Activated T-helper 1 cell treated with anti-CD3 and anti-CD28 coated beads, Interleukin-12 subunit alpha, Interleukin-12 subunit beta, Interleukin-2, Interleukin-4 antibody, amounts not matched to agents 30 ng/mL and 10 ng/mL and 1 ng/mL, durations not matched to agents 14 hours and 24 hours and 36 hours (primary cell): ENCODE measurements at regions of chr1 and their contacts with region 1.

Region 1: DNA sequence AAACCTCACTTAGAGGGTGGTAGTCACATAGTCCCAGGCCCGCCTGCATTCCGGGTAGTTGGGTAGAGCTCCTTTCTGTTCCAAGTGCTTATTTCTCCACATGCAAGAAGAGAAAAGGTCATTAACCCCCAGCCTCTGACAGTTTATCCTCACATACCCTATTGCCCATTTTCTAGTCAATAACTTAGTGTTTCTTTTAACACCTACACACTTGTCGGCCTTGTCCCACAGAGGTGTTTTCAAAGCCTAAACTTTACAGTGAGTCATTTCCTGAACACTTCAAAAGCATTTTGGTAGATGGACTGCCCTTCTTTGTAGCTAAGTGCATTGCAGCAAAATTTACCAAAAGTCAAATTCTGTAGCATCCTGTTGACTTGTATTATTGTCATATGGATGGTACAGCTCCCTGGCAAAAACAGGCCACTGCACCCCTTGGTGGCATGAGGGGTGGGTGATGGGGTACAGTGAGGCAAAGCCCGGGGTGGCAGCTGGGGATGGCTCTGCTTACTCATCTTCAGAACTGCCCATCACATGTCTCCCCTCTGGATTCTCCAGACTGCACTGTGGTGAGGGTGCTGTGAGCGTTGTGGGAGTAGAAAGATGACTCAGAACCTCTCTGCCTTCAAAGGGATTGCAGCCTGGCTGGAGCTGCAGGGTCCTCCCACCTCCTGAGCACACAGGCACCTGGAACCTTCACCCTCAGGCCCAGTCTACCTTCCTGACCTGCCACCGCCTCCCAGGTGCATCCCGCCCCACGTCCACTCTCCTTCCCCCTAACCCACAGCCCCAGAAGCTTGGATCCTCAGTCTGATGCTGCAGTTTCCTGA is 45.8 kb upstream of the DMRTB1 start:
- DNase-seq: peak; percentile 73
- H3K4me3 Mint-ChIP-seq: peak overlapping the region; percentile 68
- H3K27ac Mint-ChIP-seq: peak overlapping the region; percentile 95
- H3K4me1 Mint-ChIP-seq: peaks cover 86% of the 10 kb centered on the region
- H3K27me3 Mint-ChIP-seq: no peaks in the 10 kb centered on the region

Region 2: DNA sequence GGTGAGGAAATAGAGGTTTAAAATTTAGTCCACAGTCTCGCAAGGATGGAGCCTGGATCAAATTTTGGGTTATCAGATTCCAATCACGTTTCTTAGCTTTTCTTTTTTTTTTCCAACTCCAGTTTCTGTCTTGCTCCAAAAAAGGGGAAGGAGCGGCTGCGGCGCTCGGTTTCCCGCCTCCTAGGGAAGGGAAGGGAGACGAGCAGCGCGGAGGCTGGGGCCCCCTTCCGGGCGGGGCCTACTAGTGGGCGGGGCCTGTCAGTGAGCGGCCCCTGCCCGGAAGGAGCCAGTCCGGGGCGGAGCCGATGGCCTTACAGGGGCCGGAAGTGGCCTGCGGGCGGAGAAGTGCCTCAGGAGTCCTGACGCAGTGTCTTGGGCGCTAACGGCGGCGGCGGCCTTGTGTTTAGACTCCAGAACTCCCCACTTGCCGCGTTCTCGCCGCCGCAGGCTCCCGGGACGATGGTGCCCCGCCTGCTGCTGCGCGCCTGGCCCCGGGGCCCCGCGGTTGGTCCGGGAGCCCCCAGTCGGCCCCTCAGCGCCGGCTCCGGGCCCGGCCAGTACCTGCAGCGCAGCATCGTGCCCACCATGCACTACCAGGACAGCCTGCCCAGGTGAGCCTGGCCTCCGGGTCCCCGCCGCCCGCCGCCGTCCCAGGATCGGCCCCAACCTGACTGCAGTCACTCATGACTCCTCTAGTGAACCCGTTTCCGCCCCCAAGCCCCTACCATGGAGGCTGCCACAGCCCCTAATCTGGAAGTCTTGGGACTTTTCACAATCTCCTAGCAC is 216.7 kb before region 1 on chr1 and contains the start of gene CPT2:
- intact Hi-C with region 1: loop called (anchors 1 kb)
- DNase-seq: peak; percentile 92
- H3K4me3 Mint-ChIP-seq: peak within 1 kb of the TSS; percentile 95
- H3K27ac Mint-ChIP-seq: peak within 1 kb of the TSS; percentile 92
- H3K4me1 Mint-ChIP-seq: peaks cover 28% of the 10 kb centered on the region
- H3K27me3 Mint-ChIP-seq: no peaks in the 10 kb centered on the region
- total RNA-seq, gene CPT2: 18.5 and 19.4 TPM in 2 replicates

Region 3: DNA sequence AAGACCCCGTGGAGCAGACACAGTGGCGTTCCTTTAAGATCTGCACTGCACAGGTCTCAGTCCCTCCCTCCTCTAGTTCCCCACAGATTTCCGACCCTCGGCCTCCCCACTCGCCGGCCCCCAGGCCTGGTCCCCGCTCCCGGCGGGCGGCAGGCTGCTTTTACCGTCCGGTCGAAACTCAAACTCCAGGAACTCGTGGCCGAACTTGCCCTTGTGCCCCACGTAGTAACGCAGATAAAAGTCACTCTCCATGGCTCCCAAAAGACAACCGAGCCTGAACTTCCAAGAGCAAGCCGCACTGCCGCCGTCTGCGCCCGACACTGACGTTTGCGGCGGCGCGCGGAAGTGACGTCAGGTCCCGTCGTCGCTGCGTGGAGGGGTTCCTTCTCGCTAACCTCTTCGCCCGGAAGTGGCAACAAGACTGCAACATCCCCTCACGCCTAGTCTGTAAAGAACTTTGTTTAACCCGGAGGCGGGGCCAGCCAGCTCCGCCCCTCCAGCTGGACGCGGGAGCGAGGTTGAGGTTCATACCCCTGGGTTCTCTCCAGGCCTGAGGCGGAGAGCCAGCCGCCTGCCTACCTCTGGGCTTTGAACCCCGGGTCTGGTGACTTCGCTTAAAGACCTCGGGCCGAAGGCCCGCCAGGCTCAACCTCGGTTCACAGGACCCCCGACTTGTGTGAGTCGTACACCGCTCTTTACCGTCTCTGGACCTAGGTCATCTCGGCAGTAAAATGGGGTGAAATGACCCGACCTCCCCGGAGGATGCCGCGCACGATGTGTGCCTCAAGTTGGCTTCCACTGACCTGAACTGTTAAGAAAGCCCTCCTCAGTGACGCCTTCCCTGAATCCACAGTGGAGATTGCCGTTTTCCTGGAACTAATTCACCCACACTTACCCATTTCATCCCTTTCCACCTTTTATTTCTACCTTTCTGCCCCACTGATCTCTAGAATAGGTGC is 174.9 kb before region 1 on chr1 and contains the start of gene MAGOH:
- intact Hi-C with region 1: loop called (anchors 1 kb)
- DNase-seq: peak; percentile 93
- H3K4me3 Mint-ChIP-seq: peak within 1 kb of the TSS; percentile 97
- H3K27ac Mint-ChIP-seq: peak within 1 kb of the TSS; percentile 98
- H3K4me1 Mint-ChIP-seq: peaks cover 28% of the 10 kb centered on the region
- H3K27me3 Mint-ChIP-seq: no peaks in the 10 kb centered on the region
- total RNA-seq, gene MAGOH: 104 TPM in 2 replicates

Region 4: GRCh38 chr1:53393325-53393792 is 20.0 kb before region 1 on chr1:
- intact Hi-C with region 1: loop called (anchors 1 kb)
- DNase-seq: peak; percentile 61
- H3K4me3 Mint-ChIP-seq: no peak overlapping the region
- H3K27ac Mint-ChIP-seq: no peak overlapping the region
- H3K4me1 Mint-ChIP-seq: peaks cover 21% of the 10 kb centered on the region
- H3K27me3 Mint-ChIP-seq: peaks cover 2% of the 10 kb centered on the region

Region 5: DNA sequence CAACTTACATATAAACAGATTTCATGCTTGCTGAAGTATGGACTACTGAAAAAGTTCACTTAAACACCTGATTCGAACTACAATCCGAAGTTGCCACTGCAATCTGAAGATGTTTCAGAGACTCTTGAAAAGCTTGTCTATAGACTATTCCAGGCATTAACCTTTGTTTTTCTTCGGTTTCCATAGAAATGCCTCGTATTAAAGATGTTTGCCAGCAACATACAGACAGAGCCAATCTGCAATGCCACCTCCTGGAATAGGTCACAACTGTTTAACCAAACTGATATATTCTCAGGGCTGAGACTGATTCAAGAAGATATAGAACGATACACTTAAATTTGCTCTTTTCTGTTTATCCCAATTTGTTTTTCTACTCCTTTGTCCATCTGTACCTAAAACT is 16.9 kb after region 1 on chr1:
- intact Hi-C with region 1: no loop called
- DNase-seq: no peak
- H3K4me3 Mint-ChIP-seq: no peak overlapping the region
- H3K27ac Mint-ChIP-seq: no peak overlapping the region
- H3K4me1 Mint-ChIP-seq: peaks cover 9% of the 10 kb centered on the region
- H3K27me3 Mint-ChIP-seq: peaks cover 7% of the 10 kb centered on the region